CD4-positive, alpha-beta T cell (primary cell): ENCODE measurements at regions of chr13 and their contacts with region 1.

Region 1: GRCh38 chr13:99606324-99607066 is 105.2 kb downstream of the TM9SF2 start:
- DNase-seq: peak; percentile 85 to 97 (median 92)
- ATAC-seq: peak; percentile 88
- H3K4me3 ChIP-seq: peak within 1 kb of the TSS; percentile 73
- H3K4me3 Mint-ChIP-seq: peak within 1 kb of the TSS; percentile 96
- H3K27ac ChIP-seq: peak within 1 kb of the TSS; percentile 37 to 83
- H3K27ac Mint-ChIP-seq: peak within 1 kb of the TSS; percentile 91
- H3K4me1 ChIP-seq: peaks cover 32% of the 10 kb centered on the region
- H3K4me1 Mint-ChIP-seq: peaks cover 62% of the 10 kb centered on the region
- H3K27me3 ChIP-seq: no peaks in the 10 kb centered on the region
- H3K27me3 Mint-ChIP-seq: no peaks in the 10 kb centered on the region
- CTCF ChIP-seq: peak; percentile 4

Region 2: DNA sequence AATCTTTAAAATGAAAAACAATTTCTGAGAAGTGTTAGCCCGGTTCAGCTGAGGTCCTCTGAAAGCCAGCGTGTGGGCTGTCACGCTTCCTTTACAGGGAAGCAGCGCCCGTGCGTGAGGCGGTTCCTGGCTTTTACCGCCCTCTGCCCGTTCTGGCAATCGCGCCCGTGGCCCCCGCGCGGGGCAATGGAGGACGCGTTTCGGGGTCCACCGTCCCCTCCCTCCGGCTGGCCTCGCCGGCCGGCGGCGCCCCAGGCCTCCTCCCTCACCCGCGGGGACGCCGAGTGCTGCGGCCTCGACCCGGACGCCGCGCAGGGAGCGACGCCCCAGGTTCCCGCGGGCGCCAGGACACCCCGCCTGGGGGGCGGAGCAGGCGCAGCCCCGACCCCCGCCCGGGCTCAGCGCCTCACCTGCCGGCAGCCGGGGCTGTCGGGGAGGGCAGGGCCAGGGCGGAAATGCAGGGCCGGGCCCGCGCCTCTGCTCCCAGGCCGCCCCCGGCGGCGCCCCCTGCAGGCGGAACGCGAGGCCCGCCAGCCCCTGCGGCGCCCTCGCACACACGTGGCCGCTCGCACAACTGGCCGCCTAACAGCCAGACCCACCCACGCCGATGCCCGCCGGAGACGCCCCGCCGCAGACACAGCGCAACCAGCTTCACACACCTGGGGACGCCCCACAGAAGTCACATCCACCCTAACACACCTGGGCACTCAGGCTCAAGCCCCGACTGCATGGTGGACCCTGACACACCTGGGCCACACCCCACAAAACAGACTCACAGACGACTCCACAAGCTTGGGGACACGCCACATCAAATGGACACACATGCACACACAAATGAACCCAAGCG is 982.1 kb after region 1 on chr13 and contains the start of gene GGACT:
- CTCF ChIA-PET with region 1: interaction called, 4 read pairs
- POLR2A ChIA-PET with region 1: interaction called, 3 read pairs
- intact Hi-C with region 1: loop called in 1 of 2 experiments (anchors 5 kb)
- DNase-seq: peak; percentile 69 to 92 (median 86)
- ATAC-seq: peak; percentile 92
- H3K4me3 ChIP-seq: peak within 1 kb of the TSS; percentile 67
- H3K4me3 Mint-ChIP-seq: peak within 1 kb of the TSS; percentile 90
- H3K27ac ChIP-seq: peak within 1 kb of the TSS; percentile 72 to 79
- H3K27ac Mint-ChIP-seq: peak within 1 kb of the TSS; percentile 92
- H3K4me1 ChIP-seq: peaks cover 26% of the 10 kb centered on the region
- H3K4me1 Mint-ChIP-seq: peaks cover 51% of the 10 kb centered on the region
- H3K27me3 ChIP-seq: no peaks in the 10 kb centered on the region
- H3K27me3 Mint-ChIP-seq: no peaks in the 10 kb centered on the region
- CTCF ChIP-seq: peak; percentile 71
- total RNA-seq, gene GGACT: 2.4 to 2.9 TPM